ENCODE measurements at regions of chr7 and their contacts with region 1.

Region 1: GRCh38 chr7:81430150-81430549 is 339.7 kb downstream of the HGF start:
- DNase-seq: no peak
- H3K4me3 ChIP-seq: no peak overlapping the region
- H3K27me3 ChIP-seq: no peaks in the 10 kb centered on the region
- CTCF ChIP-seq: no peak

Region 2: GRCh38 chr7:81300753-81301152 is 129.4 kb before region 1 on chr7:
- CTCF ChIA-PET with region 1: interaction called, 3 read pairs
- POLR2A ChIA-PET with region 1: interaction called, 15 read pairs
- DNase-seq: no peak
- H3K4me3 ChIP-seq: no peak overlapping the region
- H3K27me3 ChIP-seq: no peaks in the 10 kb centered on the region
- CTCF ChIP-seq: no peak